ENCODE measurements at regions of chr17 and their contacts with region 1.

Region 1: GRCh38 chr17:1331708-1332107 is 52.2 kb downstream of the TRARG1 start:
- DNase-seq: no peak
- ATAC-seq: peak; percentile 97

Region 2: DNA sequence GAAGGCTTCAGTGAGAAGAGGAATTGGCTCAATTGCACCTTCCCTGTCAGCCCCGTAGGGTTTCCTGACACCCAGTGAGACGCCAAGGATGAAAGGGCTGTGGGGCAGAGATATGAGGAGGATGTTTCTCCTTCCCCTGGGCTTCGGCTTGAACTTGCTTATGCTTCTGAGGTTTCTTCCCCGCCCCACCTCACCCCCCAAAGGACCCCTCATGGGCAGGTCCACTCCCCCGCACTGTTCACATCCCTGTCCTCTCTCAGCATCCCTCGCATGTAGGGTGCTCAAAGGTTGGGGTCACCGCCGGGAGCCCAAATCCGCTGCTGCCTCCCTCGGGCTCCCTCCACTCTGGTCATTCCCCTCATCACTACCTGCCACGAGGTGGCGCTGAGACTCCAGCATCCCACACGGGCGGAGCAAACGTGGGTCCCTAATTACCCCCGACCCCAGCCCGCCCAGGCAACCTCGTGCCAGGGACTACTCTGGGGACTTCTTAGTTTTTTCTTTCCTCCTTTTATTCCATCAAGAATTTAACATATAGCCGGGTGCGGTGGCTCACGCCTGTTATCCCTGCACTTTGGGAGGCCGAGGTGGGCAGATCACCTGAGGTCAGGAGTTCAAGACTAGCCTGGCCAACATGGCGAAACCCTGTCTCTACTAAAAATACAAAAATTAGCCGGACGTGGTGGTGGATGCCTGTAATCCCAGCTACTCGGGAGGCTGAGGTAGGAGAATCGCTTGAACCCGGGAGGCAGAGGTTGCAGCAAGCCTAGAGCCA is 55.6 kb before region 1 on chr17:
- intact Hi-C with region 1: loop called (anchors 1 kb)
- DNase-seq: peak; percentile 82
- ATAC-seq: peak; percentile 70

Region 3: DNA sequence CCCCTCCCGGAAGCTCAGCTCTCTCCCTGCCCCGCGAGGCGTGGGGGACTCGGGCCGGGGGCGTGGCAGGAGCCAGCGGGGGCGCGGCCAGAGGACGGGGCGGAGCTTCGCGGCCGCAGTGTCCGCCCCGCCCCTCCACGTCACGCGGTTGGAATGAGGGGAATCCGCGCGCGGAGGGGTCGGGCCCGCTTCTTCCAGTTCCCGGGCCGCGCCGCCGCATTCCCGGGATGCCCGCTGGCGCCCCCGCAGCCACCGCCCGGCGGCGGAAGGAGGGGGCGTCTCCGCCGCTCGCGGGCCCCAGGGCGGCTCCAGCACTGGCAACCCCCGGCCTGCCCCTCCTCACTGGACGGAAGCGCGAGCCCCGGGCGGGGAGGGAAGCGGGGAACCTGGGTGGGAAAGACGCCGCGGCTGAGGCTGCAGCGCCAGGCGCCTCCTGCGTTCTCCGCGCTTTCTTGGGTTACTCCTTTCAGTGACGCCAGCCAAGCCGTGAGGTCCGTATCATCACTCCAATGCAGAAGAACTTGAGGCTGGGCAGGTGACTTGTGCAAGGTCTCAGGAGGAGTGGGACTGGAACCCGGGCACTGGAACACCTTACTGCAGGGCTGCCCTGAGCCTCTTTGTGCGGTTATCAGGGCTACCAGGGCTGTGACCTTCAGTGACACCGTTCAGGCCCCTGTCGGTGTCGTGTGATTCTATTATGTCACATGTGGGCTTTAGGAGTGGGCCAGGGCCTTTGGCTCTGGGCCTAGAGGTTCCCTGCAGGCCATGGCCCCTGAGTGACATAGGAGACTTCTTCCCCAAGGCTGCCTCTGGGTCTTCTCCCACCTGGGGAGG is 156.5 kb after region 1 on chr17:
- intact Hi-C with region 1: no loop called
- DNase-seq: peak; percentile 95
- ATAC-seq: peak; percentile 74

Measured in Right ventricle myocardium inferior (tissue), 1 donor.